Posterior cingulate gyrus (tissue), 11 donors: ENCODE measurements at regions of chr11 and their contacts with region 1.

Region 1: DNA sequence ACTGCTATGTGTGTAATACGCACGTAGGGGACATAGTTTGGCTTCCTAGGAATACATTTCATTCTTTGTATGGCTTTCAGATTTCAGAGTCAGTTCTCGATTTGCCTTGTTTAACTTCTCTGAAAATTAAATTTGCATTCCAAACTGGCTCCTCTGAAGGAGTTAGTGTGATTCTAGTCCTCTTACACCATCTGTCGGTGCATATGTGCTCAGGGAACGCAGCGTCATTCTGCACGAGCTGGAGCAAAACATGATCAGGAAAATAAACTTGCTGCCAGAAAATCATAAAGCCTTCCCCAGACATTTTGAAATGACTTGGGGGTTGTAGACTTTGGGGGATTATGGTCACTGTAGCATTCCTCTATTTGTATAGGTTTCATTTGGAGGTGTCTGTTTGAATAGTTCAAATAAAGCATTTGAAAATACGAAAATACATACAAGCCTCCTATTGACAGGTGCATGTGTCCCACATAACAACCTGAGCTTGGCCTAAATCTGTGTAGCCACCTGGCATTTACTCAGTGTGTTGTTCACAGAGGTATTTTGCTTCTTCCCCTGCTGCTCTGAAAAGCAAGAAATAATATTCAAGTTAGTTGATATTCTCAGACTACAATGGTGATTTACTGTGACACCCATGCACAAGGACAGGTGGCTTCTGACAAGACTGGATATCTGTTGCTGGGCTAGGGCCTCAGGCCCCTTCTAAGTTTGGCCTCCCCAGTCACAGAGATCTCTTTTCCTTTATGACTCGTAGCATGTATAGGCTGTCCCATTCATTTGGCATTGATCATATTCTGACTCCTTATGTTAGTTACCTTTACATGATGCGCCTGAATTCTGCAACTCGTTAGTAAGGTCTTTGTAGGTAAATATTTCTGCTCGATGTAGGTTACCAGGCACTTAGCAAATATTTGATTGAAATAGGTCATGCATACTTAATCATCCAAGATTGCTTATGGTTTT is 81.6 kb upstream of the SORL1-AS1 start:
- DNase-seq: peak in 9 of 10 donors; percentile 41 to 92 (median 54)

Region 2: GRCh38 chr11:121321614-121322243 is 212.7 kb before region 1 on chr11:
- intact Hi-C with region 1: loop called (anchors 1 kb)
- DNase-seq: peak; percentile 24 to 94 (median 67)

Region 3: DNA sequence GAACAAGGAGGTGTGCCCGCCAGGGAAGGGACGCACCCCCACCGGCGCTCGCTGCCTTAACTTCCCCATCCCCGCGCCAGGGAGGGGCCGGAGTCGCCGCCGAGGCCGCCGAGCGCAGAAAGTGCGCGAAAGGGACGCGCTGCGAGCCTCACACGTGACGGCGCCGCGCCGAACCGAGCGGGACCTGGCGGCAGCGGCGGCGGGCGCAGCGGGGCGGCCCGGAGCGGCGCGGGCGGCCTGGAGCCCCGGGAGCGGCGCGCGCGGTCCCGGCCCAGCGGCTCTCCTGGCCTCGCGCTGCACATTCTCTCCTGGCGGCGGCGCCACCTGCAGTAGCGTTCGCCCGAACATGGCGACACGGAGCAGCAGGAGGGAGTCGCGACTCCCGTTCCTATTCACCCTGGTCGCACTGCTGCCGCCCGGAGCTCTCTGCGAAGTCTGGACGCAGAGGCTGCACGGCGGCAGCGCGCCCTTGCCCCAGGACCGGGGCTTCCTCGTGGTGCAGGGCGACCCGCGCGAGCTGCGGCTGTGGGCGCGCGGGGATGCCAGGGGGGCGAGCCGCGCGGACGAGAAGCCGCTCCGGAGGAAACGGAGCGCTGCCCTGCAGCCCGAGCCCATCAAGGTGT is 82.3 kb before region 1 on chr11 and contains the start of gene SORL1:
- intact Hi-C with region 1: loop called (anchors 5 kb)
- DNase-seq: peak; percentile 73 to 97 (median 83)

Region 4: GRCh38 chr11:121650351-121651256 is 116.2 kb after region 1 on chr11:
- intact Hi-C with region 1: no loop called
- DNase-seq: no peak